PC-3 (cell line): ENCODE measurements at regions of chr14 and their contacts with region 1.

Region 1: GRCh38 chr14:51479584-51480325 is 172.0 kb upstream of the FRMD6 start:
- DNase-seq: peak; percentile 16
- ATAC-seq: peak; percentile 53
- H3K4me3 ChIP-seq: no peak overlapping the region
- H3K27ac ChIP-seq: no peak overlapping the region
- H3K4me1 ChIP-seq: peaks cover 17% of the 10 kb centered on the region
- H3K27me3 ChIP-seq: no peaks in the 10 kb centered on the region
- CTCF ChIP-seq: no peak

Region 2: GRCh38 chr14:51465486-51465885 is 14.3 kb before region 1 on chr14:
- CTCF ChIA-PET with region 1: no interaction called
- POLR2A ChIA-PET with region 1: interaction called, 12 read pairs
- intact Hi-C with region 1: no loop called
- DNase-seq: no peak
- ATAC-seq: no peak
- H3K4me3 ChIP-seq: no peak overlapping the region
- H3K27ac ChIP-seq: no peak overlapping the region
- H3K4me1 ChIP-seq: no peaks in the 10 kb centered on the region
- H3K27me3 ChIP-seq: no peaks in the 10 kb centered on the region
- CTCF ChIP-seq: no peak

Region 3: DNA sequence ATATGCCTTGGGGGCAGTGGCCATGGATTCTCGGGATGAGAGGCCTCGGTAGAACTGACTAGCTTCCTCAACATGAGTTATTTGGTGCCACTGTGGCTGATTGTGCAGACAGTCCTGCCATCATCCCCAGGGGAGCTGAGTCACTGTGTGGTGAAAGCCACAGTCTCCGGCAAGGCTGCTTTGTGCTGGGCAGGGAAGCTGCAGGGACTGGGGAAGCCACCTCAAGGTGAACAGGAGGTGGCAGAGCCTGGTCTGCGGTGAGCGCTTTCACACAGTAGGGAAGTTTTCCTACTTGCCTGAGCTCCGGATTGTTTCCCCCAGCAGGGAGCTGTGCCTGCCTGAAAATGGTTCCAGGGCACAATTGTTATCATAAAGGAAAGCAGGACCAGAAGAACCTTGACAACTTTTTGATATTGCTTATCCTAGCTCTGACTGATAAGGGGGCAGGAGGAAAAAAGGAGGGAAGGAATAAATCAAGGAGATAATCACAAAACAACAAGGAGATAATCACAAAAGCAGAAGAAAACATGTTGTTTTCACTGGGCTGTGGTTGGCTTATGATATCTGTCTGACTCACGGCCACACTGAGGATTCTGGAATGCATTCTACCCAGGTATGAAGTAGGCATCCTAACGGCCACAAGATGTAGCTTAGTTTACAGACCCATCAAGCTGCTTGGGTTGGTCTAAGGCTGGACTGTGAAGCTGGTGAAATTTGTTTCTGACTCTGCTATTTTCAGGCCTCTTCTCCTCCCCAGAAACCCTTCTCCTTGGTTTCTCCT is 348.5 kb after region 1 on chr14:
- CTCF ChIA-PET with region 1: no interaction called
- POLR2A ChIA-PET with region 1: no interaction called
- intact Hi-C with region 1: no loop called
- DNase-seq: peak; percentile 94
- ATAC-seq: peak; percentile 98
- H3K4me3 ChIP-seq: peak overlapping the region; percentile 54; the same call in 1 of the 2 replicates
- H3K27ac ChIP-seq: peak overlapping the region; percentile 95
- H3K4me1 ChIP-seq: peaks cover 31% of the 10 kb centered on the region
- H3K27me3 ChIP-seq: no peaks in the 10 kb centered on the region
- CTCF ChIP-seq: peak; percentile 22; the same call in 1 of the 2 replicates